Endothelial cell of umbilical vein (primary cell): ENCODE measurements at regions of chr3 and their contacts with region 1.

Region 1: GRCh38 chr3:156474560-156475389 is 80.1 kb downstream of the SSR3 start:
- DNase-seq: no peak
- H3K4me3 ChIP-seq: no peak overlapping the region
- H3K27ac ChIP-seq: no peak overlapping the region
- H3K4me1 ChIP-seq: no peaks in the 10 kb centered on the region
- H3K27me3 ChIP-seq: no peaks in the 10 kb centered on the region
- CTCF ChIP-seq: peak; percentile 29 to 43
- POLR2A ChIP-seq: no peak

Region 2: DNA sequence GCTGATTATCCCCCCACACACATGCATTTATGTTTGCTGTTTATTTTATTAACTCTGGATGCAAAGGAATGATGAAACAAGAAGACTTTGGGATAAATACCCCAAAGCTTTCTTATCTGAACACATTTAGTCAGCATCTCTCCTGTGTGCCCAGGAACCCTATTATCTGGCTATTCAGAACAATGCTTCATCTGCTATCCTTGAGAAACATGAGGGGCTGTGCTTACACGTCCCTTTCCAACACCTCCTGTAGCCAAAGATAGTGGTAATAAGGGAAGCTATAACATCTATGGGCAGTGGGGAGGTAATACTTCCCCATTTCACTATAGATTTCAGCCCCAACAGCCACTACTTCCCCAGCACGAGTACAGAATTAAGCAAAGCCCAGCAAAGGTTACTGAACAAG is 14.6 kb before region 1 on chr3:
- CTCF ChIA-PET with region 1: interaction called, 10 read pairs
- POLR2A ChIA-PET with region 1: no interaction called
- dilution Hi-C with region 1: no loop called
- intact Hi-C with region 1: no loop called
- DNase-seq: no peak
- H3K4me3 ChIP-seq: no peak overlapping the region
- H3K27ac ChIP-seq: no peak overlapping the region
- H3K4me1 ChIP-seq: no peaks in the 10 kb centered on the region
- H3K27me3 ChIP-seq: no peaks in the 10 kb centered on the region
- CTCF ChIP-seq: no peak
- POLR2A ChIP-seq: no peak